HEK293T (cell line): ENCODE measurements at regions of chr14 and their contacts with region 1.

Region 1: GRCh38 chr14:101964297-101965144 is at the start of gene DYNC1H1:
- DNase-seq: peak; percentile 92

Region 2: GRCh38 chr14:101903111-101903561 is 61.4 kb before region 1 on chr14:
- CTCF ChIA-PET with region 1: no interaction called
- POLR2A ChIA-PET with region 1: no interaction called
- DNase-seq: no peak

Region 3: GRCh38 chr14:101917413-101918017 is 47.0 kb before region 1 on chr14:
- CTCF ChIA-PET with region 1: no interaction called
- POLR2A ChIA-PET with region 1: no interaction called
- DNase-seq: no peak

Region 4: DNA sequence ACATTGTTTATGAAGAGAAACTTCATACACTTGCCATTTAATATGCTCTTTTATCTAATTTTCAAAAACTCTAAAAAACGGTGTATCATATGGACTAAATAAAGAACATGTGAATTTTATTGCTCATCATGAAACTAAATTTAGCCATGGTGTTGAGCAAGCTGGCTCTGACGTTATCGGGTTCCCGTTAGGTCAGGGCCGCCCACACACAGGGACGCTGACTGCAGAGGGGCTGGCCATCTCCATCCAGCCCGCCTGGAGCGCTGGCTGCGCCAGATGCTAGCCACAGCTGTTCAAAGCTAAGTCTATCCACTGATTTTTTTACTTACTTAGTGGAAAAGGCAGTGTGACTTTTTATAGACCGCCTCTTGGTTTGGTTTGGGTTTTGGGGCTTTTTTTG is 36.7 kb before region 1 on chr14:
- CTCF ChIA-PET with region 1: no interaction called
- POLR2A ChIA-PET with region 1: no interaction called
- DNase-seq: no peak

Region 5: GRCh38 chr14:101947906-101948665 is 16.4 kb before region 1 on chr14:
- CTCF ChIA-PET with region 1: interaction called, 7 read pairs
- POLR2A ChIA-PET with region 1: interaction called, 12 read pairs
- DNase-seq: peak; percentile 99

Region 6: GRCh38 chr14:102013669-102014200 is 49.2 kb after region 1 on chr14:
- CTCF ChIA-PET with region 1: no interaction called
- POLR2A ChIA-PET with region 1: no interaction called
- DNase-seq: no peak